Esophagus muscularis mucosa (tissue), 4 donors: ENCODE measurements at regions of chr1 and their contacts with region 1.

Region 1: DNA sequence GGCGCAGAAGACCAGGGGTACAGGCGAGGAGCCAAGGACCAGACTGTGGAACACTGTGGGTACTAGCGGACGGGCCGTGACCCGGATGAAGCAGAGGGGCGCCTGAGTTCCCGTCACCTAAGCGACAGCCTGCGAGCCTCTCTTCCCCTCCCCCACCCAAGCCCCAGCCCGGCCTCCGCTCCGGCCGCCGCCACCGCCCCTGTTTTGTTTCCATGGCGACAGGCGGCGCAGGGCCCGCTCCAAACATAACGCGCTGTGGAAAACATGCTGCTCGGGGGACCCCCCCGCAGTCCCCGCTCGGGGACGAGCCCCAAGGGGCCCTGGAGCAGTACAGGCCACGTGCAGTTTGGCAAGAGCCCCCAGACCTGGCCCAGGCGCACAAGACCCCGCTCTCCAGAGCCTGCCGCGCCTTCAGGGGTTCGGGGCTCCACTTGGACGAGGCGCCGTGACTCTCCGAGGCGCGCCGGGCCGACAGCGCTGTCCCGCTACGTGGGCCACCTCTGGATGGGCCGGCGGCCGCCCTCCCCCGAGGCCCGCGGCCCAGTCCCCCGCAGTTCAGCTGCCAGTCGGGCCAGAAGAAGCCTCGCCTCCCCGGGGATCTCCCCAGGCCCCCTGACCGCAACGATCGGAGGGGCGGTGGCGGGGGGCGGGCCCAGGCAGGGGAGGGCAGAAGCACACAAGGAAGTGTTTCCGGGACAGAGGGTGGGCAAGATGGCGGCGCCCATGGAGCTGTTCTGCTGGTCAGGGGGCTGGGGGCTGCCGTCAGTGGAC is at the start of gene MTX1:
- DNase-seq: peak; percentile 97
- H3K4me3 ChIP-seq: peak within 1 kb of the TSS; percentile 73 to 96 (median 87)
- H3K27ac ChIP-seq: peak within 1 kb of the TSS; percentile 98 to 100 (median 99)
- H3K4me1 ChIP-seq: peaks cover 23 to 63% (median 43%) of the 10 kb centered on the region in 4 donors
- H3K27me3 ChIP-seq: no peaks in the 10 kb centered on the region
- CTCF ChIP-seq: no peak
- EP300 ChIP-seq: no peak
- POLR2A ChIP-seq: peak; percentile 40
- total RNA-seq, gene MTX1: 34.1 to 52.8 (median 38.0) TPM

Region 2: DNA sequence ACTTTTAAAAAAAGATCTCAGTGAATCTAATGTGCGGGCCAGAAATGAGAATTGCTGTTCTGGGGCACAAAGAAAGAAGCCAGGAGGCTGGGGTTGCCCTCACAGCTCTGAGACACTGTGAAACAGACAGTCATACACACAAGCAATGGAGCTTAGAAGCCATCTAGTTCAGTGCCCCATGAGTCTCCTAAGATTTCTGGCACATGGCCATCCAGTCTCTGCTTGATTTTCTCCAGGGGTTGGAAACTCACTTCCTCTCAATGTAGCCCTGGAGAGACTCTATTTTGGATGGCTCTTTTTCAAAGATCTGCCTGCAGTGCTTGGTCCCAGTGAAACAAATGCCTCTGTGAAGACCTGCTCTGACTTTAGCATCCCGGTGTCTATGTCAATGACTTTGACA is 377.3 kb before region 1 on chr1:
- intact Hi-C with region 1: no loop called
- DNase-seq: no peak
- H3K4me3 ChIP-seq: no peak overlapping the region
- H3K27ac ChIP-seq: no peak overlapping the region
- H3K4me1 ChIP-seq: peaks cover 17 to 52% (median 38%) of the 10 kb centered on the region in 4 donors
- H3K27me3 ChIP-seq: no peaks in the 10 kb centered on the region
- CTCF ChIP-seq: no peak
- EP300 ChIP-seq: no peak
- POLR2A ChIP-seq: no peak

Region 3: GRCh38 chr1:155135415-155136028 is 73.2 kb before region 1 on chr1 and contains the start of gene SLC50A1:
- intact Hi-C with region 1: no loop called
- DNase-seq: peak; percentile 99
- H3K4me3 ChIP-seq: peak within 1 kb of the TSS; percentile 72 to 81 (median 76)
- H3K27ac ChIP-seq: peak within 1 kb of the TSS; percentile 93 to 99 (median 96)
- H3K4me1 ChIP-seq: peaks cover 71 to 89% (median 83%) of the 10 kb centered on the region in 4 donors
- H3K27me3 ChIP-seq: no peaks in the 10 kb centered on the region
- CTCF ChIP-seq: peak; percentile 24 to 72 (median 46)
- EP300 ChIP-seq: no peak
- POLR2A ChIP-seq: peak; percentile 84
- total RNA-seq, gene SLC50A1: 13.3 to 18.7 (median 15.2) TPM

Region 4: DNA sequence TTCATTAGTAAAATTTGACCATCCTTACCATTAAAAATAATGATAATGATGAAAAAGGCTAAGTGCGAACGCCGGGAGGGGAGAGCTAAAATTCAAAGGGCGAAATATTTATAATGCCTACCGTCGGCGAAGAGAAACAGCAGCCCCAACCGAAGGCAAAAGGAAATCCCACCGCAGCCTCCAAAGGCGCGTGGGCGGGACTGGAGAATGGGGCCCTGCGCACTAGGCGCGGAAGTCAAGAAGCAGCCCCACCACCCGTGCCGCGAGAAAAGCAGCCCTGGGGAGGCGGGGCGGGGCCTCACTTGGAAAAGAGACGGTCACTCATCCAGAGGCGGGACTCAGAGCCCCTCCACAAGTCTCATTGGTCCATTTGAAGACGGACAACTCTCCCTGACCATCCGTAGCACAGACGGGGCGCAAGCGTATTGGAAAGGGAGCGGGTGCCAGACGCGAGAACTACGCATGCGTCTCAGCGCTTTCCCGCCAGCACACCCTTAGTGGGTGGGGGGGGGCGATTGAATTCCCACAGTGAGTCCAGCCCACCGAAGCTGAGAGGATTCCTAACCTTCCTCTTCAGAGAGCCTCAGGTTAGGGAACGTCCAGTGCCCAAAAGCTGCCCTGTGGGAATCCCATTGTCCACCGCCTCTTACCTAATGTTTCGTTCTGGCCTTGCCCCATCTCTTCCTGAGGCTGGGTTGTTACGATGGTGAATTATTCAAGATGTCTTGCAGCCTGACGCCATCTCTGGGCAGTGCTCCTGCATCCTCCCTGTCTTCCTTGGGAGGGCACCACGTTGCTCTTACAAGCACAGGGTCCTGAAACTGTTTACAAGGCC is 18.8 kb after region 1 on chr1:
- intact Hi-C with region 1: loop called (anchors 1 kb)
- DNase-seq: peak; percentile 99
- H3K4me3 ChIP-seq: peak overlapping the region; percentile 53 to 72 (median 62)
- H3K27ac ChIP-seq: peak overlapping the region; percentile 82 to 92 (median 88)
- H3K4me1 ChIP-seq: peaks cover 17 to 51% (median 48%) of the 10 kb centered on the region in 4 donors
- H3K27me3 ChIP-seq: no peaks in the 10 kb centered on the region
- CTCF ChIP-seq: no peak
- EP300 ChIP-seq: no peak
- POLR2A ChIP-seq: peak; percentile 51